ENCODE measurements at regions of chr2 and their contacts with region 1.

Region 1: GRCh38 chr2:191521608-191522208 is 156.2 kb upstream of the NABP1 start:
- ATAC-seq: peak in 3 of 8 experiments; percentile 32 to 54 (median 45)
- H3K4me3 ChIP-seq: no peak overlapping the region
- H3K27ac ChIP-seq: no peak overlapping the region
- H3K4me1 ChIP-seq: peaks cover 4 to 8% of the 10 kb centered on the region in 2 donors

Region 2: DNA sequence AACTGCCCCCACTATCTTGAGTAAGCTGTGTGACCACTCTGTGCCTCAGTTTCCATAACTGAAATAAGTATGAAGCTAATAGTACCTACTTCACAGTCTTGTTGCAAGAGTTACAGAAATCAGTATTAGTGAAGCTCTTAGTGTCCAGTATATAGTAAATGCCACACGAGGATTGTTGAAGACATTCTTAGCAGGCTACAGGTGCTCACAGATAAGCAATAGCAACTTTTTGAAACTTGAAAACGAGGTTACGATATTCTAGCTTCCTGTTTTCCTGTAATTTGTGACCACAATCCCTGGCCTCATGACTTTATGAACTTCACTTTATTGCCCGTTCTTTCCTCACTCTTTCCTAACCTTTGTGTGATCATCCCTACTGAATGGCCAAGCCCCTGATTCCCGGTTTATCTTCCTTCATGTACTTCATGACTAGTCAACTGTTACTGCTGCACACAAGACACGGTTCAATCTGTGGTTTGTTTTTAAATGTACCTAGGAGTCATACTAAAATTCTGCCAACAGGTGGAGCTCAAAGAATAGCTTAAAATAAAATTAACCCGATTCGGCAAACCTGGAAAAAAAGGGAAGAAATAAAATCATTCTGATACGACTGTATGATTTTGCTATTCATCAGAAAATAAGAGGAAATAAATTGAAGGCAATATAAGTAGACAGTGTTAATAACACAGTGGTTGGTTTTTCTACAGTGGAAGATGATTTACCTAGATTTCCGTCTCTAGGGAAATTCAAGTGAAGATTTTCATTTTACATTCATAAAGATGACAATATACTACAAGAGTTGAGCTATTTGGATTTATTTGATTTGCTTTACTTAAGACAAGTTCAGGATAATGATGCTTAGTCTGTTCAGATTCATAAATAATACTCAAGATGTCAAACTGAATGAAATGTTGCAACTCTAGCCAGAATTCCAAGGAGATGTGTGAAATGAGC is 469.6 kb before region 1 on chr2:
- in situ Hi-C with region 1: loop called in 3 of 9 experiments (anchors 10 to 25 kb)
- ATAC-seq: peak in 7 of 8 experiments; percentile 21 to 53 (median 31)
- H3K4me3 ChIP-seq: no peak overlapping the region
- H3K27ac ChIP-seq: no peak overlapping the region
- H3K4me1 ChIP-seq: peaks cover 4 to 5% of the 10 kb centered on the region in 2 donors

Region 3: GRCh38 chr2:191165176-191165643 is 356.5 kb before region 1 on chr2:
- in situ Hi-C with region 1: loop called in 4 of 9 experiments (anchors 25 kb)
- ATAC-seq: peak; percentile 66 to 97 (median 74)
- H3K4me3 ChIP-seq: no peak overlapping the region
- H3K27ac ChIP-seq: no peak overlapping the region
- H3K4me1 ChIP-seq: peaks cover 0 to 2% of the 10 kb centered on the region in 2 donors

Region 4: GRCh38 chr2:191178806-191179514 is 342.7 kb before region 1 on chr2:
- in situ Hi-C with region 1: loop called in 5 of 9 experiments (anchors 25 kb)
- ATAC-seq: peak in 2 of 8 experiments; percentile 14 to 60
- H3K4me3 ChIP-seq: no peak overlapping the region
- H3K27ac ChIP-seq: no peak overlapping the region
- H3K4me1 ChIP-seq: no peaks in the 10 kb centered on the region

Region 5: DNA sequence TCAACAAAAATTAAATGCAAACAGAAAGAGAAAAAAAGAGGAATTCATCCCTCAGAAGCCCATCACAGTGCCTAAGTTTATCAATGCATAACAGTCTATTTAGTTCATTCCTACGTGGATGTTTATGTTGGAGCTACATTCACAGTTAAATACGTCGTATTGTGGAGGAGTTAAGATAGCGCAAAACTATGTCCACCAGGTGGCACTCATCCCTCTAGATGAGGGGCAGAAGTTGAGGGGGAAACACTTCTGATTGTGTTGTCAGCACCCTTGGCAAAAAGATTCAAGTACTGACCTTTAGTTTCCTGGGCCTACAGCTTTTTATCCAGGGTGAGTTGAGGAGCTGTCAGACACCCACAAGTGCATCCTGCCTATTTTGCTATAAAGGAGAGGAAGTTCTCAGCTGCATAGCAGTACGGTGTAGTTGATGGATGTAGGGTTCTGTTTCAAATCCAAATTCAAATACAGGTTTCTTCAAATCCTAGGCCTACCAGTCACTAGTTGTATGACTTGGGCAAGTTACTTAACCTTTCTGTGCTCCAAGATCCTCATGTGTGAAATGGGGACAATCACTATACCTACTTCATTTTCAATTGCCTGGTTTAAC is 303.3 kb before region 1 on chr2:
- in situ Hi-C with region 1: loop called in 1 of 9 experiments (anchors 25 kb)
- ATAC-seq: peak in 7 of 8 experiments; percentile 32 to 74 (median 60)
- H3K4me3 ChIP-seq: no peak overlapping the region
- H3K27ac ChIP-seq: no peak overlapping the region
- H3K4me1 ChIP-seq: no peaks in the 10 kb centered on the region

Region 6: DNA sequence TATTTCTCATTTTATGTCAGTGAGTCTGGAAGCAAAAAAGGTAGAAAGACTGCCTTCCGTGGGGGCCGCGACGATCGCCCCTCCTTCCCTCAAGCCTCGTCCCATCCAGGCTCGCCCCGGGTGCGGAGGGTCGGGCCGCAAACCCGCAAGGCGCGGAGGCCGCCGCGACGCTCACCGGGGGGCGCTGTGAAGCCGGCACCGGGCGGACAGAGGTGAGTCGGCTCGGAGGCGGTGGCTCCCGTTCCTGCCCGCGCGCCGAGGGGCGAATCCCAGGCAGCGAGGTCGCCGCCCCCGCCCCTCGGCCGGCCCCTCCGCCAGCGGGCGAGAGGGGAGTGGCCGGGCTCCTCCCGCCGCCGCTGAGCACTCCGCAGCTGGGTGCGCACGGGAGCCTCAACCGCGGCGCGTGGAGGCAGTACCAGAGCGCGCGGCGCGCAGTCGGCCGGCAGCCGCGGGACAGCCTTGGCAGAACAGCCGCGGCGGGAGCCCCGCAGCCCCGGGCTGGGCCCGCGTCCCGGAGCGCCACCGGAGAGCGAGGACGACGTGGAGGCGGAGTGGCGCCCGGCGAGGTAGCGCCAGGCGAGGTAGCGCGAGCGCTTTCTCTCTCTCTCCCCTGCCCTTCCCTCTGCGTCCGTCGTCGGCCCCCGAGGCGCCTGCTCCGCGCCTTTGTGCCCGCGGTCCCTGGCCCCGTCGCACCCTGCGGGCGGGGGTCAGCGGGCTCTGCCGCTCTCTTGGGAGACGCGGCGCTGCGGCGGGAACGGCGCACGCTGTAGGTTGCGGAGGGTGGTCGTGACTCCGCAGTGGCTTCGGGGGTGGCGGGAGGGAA is 276.5 kb before region 1 on chr2 and contains the start of gene MYO1B:
- in situ Hi-C with region 1: loop called in 2 of 9 experiments (anchors 25 kb)
- ATAC-seq: peak; percentile 69 to 86 (median 82)
- H3K4me3 ChIP-seq: peak within 1 kb of the TSS; percentile 59 to 68 (median 63)
- H3K27ac ChIP-seq: peak within 1 kb of the TSS; percentile 71 to 86
- H3K4me1 ChIP-seq: peaks cover 11 to 18% of the 10 kb centered on the region in 2 donors
- total RNA-seq, gene MYO1B: 35.6 to 106 (median 51.5) TPM

Region 7: DNA sequence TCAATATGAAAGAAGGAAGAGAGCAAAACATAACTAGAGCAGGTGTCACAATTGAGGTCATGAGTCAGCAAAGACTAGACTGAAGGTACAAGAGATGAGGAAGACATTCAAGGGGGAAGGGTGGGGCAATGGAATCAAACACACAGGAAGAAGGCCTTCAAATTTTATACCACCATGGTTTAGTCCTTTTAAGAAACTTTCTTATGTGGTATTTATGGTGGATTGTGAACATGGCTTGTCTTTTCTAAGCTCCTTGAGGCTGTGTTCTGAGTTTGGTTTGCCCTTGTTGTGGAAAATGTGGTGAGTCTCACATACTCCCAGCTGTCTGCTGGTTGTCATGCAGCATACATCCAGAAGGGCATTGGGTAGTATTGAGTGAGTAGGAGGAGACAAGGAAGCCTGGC is 218.3 kb after region 1 on chr2:
- in situ Hi-C with region 1: no loop called
- ATAC-seq: no peak
- H3K4me3 ChIP-seq: no peak overlapping the region
- H3K27ac ChIP-seq: no peak overlapping the region
- H3K4me1 ChIP-seq: peaks cover 0 to 3% of the 10 kb centered on the region in 2 donors

Region 8: DNA sequence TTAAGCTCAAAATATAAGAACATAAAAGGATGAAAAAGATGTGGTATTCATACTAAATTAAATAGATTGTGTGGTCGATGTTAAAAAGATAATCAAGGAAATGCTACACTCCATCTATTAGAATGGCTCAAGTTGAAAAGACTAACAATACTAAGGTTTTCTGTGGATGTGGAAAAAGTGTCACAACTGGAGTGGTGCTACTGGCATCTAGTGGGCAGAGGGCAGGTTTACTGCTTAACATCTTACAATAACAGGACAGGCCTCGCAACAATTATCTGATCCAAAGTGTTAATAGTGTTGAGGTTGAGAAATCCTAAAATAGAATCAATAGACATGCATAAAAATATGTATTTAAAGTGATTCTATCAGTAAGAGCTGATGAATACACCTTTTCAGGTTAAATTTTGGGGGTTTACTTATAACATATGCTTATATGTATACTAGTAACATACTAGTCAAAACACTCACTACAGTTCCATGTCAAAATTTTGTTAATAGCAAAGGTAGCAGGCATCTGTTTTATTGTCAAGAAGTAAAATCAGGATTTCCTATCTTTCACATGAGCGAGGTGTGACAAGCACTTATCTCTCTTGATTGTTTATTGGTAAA is 764.5 kb after region 1 on chr2:
- in situ Hi-C with region 1: no loop called
- ATAC-seq: peak in 4 of 8 experiments; percentile 44 to 77 (median 62)
- H3K4me3 ChIP-seq: no peak overlapping the region
- H3K27ac ChIP-seq: no peak overlapping the region
- H3K4me1 ChIP-seq: peaks cover 3 to 21% of the 10 kb centered on the region in 2 donors